Endothelial cell of umbilical vein (primary cell): ENCODE measurements at regions of chr17 and their contacts with region 1.

Region 1: DNA sequence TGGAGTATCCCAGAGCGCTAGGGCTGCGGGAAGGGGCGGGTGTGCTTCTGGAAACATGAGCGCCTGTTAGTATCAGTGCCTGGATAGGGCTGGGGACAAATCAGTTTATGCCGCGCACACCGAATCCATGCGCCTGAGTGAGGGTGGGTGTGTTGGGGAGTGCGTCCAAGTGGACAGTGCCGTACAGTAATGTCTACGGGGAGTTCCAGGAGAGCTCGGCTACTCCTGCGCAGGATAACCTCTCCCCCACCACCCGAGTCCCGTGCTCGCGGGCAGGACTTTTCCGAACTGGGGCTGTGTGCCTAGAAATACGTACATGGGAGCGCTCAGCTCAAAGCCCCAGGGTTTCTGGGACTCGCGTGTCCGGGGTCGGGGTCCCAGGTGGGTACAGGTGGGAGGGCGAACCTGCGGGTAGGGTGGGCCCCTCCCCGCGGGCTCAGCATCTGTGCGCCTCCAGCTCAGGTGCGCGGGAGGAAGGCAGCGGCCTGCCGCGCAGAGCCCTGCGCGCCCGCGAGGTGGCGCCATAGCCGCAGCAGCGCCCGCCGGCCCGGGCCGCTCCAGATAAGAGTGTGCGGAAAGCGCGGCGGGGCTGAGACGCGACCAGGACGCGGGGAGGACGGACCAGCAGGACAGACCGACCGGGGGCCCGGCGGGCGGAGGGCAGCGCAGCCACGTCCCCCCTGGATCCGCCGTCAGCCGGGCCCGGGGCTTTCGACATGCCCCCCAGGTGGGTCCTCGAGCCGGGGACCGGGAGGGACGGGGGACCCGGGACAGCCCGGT is at the start of gene HIC1:
- DNase-seq: peak; percentile 75
- H3K4me3 ChIP-seq: peak within 1 kb of the TSS; percentile 61 to 74 (median 72)
- H3K27ac ChIP-seq: peak within 1 kb of the TSS; percentile 64
- H3K4me1 ChIP-seq: peaks cover 20% of the 10 kb centered on the region
- H3K27me3 ChIP-seq: peaks cover 2 to 11% of the 10 kb centered on the region in 2 experiments
- CTCF ChIP-seq: peak; percentile 75 to 94
- POLR2A ChIP-seq: peak; percentile 70
- total RNA-seq, gene HIC1: 25.8 and 35.5 TPM in 2 replicates

Region 2: GRCh38 chr17:2087597-2088211 is 33.0 kb after region 1 on chr17:
- CTCF ChIA-PET with region 1: interaction called, 39 read pairs
- POLR2A ChIA-PET with region 1: no interaction called
- dilution Hi-C with region 1: no loop called
- intact Hi-C with region 1: no loop called
- DNase-seq: peak; percentile 86
- H3K4me3 ChIP-seq: no peak overlapping the region
- H3K27ac ChIP-seq: peak overlapping the region; percentile 54
- H3K4me1 ChIP-seq: peaks cover 75% of the 10 kb centered on the region
- H3K27me3 ChIP-seq: no peaks in the 10 kb centered on the region
- CTCF ChIP-seq: no peak
- POLR2A ChIP-seq: no peak

Region 3: GRCh38 chr17:2179615-2180295 is 125.1 kb after region 1 on chr17:
- CTCF ChIA-PET with region 1: interaction called, 25 read pairs
- POLR2A ChIA-PET with region 1: interaction called, 5 read pairs
- dilution Hi-C with region 1: no loop called
- intact Hi-C with region 1: no loop called
- DNase-seq: peak; percentile 98
- H3K4me3 ChIP-seq: no peak overlapping the region
- H3K27ac ChIP-seq: peak overlapping the region; percentile 94
- H3K4me1 ChIP-seq: peaks cover 75% of the 10 kb centered on the region
- H3K27me3 ChIP-seq: no peaks in the 10 kb centered on the region
- CTCF ChIP-seq: no peak
- POLR2A ChIP-seq: peak; percentile 29

Region 4: DNA sequence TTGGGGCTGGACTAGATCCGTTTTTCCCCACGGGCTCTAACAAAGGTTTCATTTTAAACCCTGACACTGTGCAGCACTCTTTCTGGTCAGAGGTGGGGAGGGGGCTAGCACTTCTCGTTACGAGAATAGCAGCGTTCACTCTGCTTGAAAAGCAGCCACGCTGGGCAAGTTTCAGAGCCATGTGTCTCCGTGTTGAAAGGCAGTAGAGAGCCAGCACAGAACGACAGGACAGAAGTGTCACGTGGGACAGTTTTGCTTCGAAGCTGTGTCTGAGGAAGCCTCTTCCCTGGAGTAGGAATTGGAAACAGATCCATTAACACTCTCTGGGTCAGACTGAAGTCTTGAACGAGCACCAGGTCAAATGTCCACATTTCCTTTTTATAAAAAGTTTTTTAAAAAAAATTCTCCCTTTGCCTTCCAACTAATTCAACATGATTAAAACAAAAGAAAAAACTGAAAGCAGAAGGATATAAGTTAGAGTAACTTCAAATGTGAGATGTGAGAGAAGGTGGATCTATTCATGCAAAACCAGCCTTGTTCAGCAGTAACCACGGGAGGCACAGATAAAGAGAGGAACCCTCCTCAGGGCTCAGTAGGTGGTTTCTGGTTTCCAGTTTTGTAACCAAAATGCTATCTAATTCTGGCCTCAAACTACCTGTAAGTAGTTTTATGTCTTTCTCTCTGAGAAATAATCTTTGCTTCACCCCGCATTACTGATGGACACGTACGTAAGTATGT is 183.9 kb after region 1 on chr17:
- CTCF ChIA-PET with region 1: interaction called, 455 read pairs
- POLR2A ChIA-PET with region 1: no interaction called
- dilution Hi-C with region 1: no loop called
- intact Hi-C with region 1: no loop called
- DNase-seq: peak; percentile 52
- H3K4me3 ChIP-seq: no peak overlapping the region
- H3K27ac ChIP-seq: peak overlapping the region; percentile 53
- H3K4me1 ChIP-seq: peaks cover 30% of the 10 kb centered on the region
- H3K27me3 ChIP-seq: no peaks in the 10 kb centered on the region
- CTCF ChIP-seq: no peak
- POLR2A ChIP-seq: no peak

Region 5: GRCh38 chr17:2282297-2282873 is 227.7 kb after region 1 on chr17:
- CTCF ChIA-PET with region 1: interaction called, 47 read pairs
- POLR2A ChIA-PET with region 1: no interaction called
- dilution Hi-C with region 1: no loop called
- intact Hi-C with region 1: loop called (anchors 1 kb)
- DNase-seq: peak; percentile 71
- H3K4me3 ChIP-seq: no peak overlapping the region
- H3K27ac ChIP-seq: no peak overlapping the region
- H3K4me1 ChIP-seq: no peaks in the 10 kb centered on the region
- H3K27me3 ChIP-seq: no peaks in the 10 kb centered on the region
- CTCF ChIP-seq: peak; percentile 25 to 46
- POLR2A ChIP-seq: no peak